Gastrocnemius medialis (tissue), 4 donors: ENCODE measurements at regions of chr13 and their contacts with region 1.

Region 1: DNA sequence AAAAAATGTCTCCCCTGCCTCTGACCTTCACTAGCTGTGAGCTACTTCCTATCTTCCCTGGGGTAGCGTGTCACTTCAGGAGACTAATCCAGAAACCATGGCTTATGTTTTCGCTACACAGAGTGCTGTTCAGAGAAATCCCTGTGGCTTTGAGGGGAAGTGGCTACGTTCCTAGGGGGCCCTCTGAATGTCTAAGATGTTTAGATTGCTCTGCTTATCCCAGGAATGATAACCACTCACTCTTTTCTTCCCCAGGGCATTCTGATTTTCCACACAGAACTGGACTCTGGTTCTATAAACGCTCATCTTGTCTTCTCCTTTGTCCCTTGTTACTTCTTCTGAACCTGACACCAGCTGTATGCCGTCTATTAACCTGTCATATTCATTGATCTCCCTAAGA is 572.5 kb downstream of the OLFM4 start:
- DNase-seq: no peak
- ATAC-seq: no peak
- H3K4me3 ChIP-seq: no peak overlapping the region
- H3K27ac ChIP-seq: no peak overlapping the region
- H3K4me1 ChIP-seq: no peaks in the 10 kb centered on the region
- H3K27me3 ChIP-seq: no peaks in the 10 kb centered on the region
- CTCF ChIP-seq: no peak
- POLR2A ChIP-seq: no peak

Region 2: GRCh38 chr13:53151336-53152056 is 449.6 kb before region 1 on chr13:
- in situ Hi-C with region 1: no loop called
- intact Hi-C with region 1: no loop called
- DNase-seq: no peak
- ATAC-seq: no peak
- H3K4me3 ChIP-seq: no peak overlapping the region
- H3K27ac ChIP-seq: no peak overlapping the region
- H3K4me1 ChIP-seq: no peaks in the 10 kb centered on the region
- H3K27me3 ChIP-seq: peaks cover 0 to 3% (median 0%) of the 10 kb centered on the region in 3 donors
- CTCF ChIP-seq: peak in 3 of 5 experiments; percentile 22 to 40 (median 35)
- POLR2A ChIP-seq: no peak

Region 3: GRCh38 chr13:53631511-53631910 is 30.4 kb after region 1 on chr13:
- in situ Hi-C with region 1: no loop called
- intact Hi-C with region 1: no loop called
- DNase-seq: no peak
- ATAC-seq: no peak
- H3K4me3 ChIP-seq: no peak overlapping the region
- H3K27ac ChIP-seq: no peak overlapping the region
- H3K4me1 ChIP-seq: no peaks in the 10 kb centered on the region
- H3K27me3 ChIP-seq: no peaks in the 10 kb centered on the region
- CTCF ChIP-seq: no peak
- POLR2A ChIP-seq: no peak

Region 4: DNA sequence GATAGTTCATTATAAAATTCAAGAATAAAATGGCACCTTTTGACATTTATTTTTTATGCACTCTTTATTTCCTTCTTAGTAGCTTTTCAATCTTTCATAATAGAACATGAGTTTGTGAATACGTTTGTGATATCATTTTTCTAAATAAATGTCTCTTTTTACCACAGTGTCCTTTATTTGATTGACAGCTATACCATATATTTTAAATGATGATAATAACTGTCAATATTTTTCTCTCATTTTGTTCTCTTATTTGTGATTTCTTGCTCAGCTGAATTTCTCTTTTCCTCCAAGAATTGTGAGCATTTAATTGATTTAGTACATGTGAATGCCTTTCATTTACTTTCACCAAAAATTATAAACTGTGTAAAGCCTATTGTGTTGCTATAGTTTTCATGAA is 65.3 kb after region 1 on chr13:
- in situ Hi-C with region 1: loop called in 1 of 4 experiments (anchors 10 kb)
- intact Hi-C with region 1: no loop called
- DNase-seq: no peak
- ATAC-seq: no peak
- H3K4me3 ChIP-seq: no peak overlapping the region
- H3K27ac ChIP-seq: no peak overlapping the region
- H3K4me1 ChIP-seq: no peaks in the 10 kb centered on the region
- H3K27me3 ChIP-seq: no peaks in the 10 kb centered on the region
- CTCF ChIP-seq: no peak
- POLR2A ChIP-seq: no peak

Region 5: DNA sequence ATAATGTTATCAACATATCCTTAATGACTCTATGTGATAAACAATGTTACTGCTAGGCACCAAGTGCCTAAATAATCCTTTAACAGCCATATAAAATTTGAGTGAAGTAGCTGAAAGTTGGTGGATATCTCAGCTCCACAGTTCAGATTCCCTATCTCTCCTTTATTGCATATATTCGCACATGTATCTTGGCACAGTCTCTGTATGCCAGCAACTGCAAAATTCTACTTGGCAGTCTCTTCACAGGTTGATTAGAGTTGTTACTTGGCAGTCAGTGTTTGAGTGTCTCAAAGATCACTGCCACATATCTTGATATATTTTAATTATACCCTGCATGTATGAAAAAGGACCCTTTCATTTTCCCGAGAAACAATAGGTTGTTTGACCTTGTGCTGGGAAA is 306.8 kb after region 1 on chr13:
- in situ Hi-C with region 1: no loop called
- intact Hi-C with region 1: no loop called
- DNase-seq: no peak
- ATAC-seq: no peak
- H3K4me3 ChIP-seq: no peak overlapping the region
- H3K27ac ChIP-seq: no peak overlapping the region
- H3K4me1 ChIP-seq: no peaks in the 10 kb centered on the region
- H3K27me3 ChIP-seq: no peaks in the 10 kb centered on the region
- CTCF ChIP-seq: no peak
- POLR2A ChIP-seq: no peak

Region 6: DNA sequence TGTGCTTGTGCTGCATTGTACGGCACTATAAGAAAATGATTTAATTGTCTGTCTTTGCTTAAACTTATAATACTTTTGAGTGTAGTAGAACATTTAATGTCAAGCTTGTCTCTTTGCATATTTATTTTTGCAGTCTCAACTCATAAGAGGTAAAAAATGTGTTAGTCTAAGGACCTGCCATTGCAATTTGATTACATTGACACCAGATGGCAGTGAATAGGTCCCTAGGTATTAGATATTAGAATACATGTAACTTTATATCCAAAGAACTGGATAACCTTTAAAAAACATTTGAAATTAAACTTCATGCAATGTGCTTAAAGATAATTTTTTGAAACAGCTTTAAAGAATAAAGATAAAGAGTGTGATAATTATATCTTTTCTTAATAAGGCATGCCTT is 848.8 kb after region 1 on chr13:
- in situ Hi-C with region 1: no loop called
- intact Hi-C with region 1: no loop called
- DNase-seq: no peak
- ATAC-seq: no peak
- H3K4me3 ChIP-seq: no peak overlapping the region
- H3K27ac ChIP-seq: no peak overlapping the region
- H3K4me1 ChIP-seq: no peaks in the 10 kb centered on the region
- H3K27me3 ChIP-seq: no peaks in the 10 kb centered on the region
- CTCF ChIP-seq: no peak
- POLR2A ChIP-seq: no peak